PC-3 (cell line): ENCODE measurements at regions of chr10 and their contacts with region 1.

Region 1: DNA sequence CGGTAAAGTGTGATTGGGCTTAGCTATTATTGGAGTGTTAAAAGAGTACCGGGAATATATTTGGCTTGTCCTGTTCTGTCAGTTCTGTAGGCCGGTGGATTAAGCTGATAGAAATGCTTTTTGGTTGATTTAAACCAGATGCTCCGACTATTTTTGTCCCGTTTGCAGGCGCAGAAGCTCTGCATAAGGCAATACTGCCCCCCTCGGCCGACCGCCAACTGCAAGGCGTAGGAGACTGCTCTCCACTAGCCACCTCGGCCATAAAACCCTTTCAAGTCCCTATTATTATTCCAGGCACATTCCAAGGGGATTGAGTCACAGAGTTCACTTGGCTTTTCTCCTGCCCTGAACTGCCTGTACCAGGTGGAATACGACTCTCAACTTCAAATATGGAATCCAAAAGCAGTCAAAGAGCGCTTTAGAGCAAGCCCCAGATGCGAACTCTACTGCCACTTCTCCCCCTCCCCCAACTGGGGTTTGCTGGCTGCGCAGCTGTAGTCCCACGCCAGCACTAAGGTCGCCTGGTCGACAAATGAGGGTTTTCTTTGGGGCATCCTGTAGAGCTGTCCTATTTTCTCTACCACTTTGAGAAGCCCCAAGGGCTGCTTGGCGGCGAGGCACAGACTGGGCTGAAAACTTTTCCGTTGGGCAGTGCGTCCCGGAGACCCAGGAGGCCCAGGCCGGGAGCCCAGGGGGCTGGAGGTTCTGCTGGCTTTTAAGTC is 108.3 kb downstream of the REEP3 start:
- DNase-seq: peak; percentile 100
- ATAC-seq: peak; percentile 55
- H3K4me3 ChIP-seq: peak overlapping the region; percentile 73
- H3K27ac ChIP-seq: peak overlapping the region; percentile 95
- H3K4me1 ChIP-seq: peaks cover 52% of the 10 kb centered on the region
- H3K27me3 ChIP-seq: no peaks in the 10 kb centered on the region
- CTCF ChIP-seq: peak; percentile 98

Region 2: DNA sequence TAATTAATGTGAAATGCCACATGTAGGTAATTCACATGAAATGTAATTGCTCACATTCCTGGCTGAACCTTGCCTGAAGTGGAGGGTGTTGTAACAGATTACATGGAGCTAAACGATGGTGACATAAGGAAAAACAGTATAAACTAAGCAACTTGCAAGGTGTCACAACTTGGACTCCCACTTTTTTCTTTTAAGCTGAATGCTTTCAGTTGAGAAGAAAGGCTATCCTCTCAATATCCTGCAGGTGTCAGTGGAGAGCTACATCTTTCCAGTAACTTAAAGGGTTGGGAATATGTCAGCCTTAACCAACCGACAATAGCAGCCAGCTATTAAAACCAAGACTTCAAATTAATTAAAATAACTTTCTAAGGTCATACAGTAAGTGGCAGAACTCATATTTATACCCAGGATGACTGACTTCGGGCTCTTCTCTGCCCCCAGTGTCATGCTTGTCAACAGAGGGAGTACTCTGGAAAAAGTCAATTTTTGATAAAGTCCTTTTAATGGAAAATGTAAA is 462.7 kb before region 1 on chr10:
- CTCF ChIA-PET with region 1: interaction called, 17 read pairs
- POLR2A ChIA-PET with region 1: interaction called, 4 read pairs
- intact Hi-C with region 1: loop called (anchors 1 kb)
- DNase-seq: peak; percentile 99
- ATAC-seq: peak; percentile 70
- H3K4me3 ChIP-seq: no peak overlapping the region
- H3K27ac ChIP-seq: no peak overlapping the region
- H3K4me1 ChIP-seq: no peaks in the 10 kb centered on the region
- H3K27me3 ChIP-seq: no peaks in the 10 kb centered on the region
- CTCF ChIP-seq: peak; percentile 100

Region 3: GRCh38 chr10:63268798-63269503 is 360.6 kb before region 1 on chr10:
- CTCF ChIA-PET with region 1: interaction called, 14 read pairs
- POLR2A ChIA-PET with region 1: interaction called, 19 read pairs
- intact Hi-C with region 1: loop called (anchors 1 kb)
- DNase-seq: peak; percentile 100
- ATAC-seq: peak; percentile 90
- H3K4me3 ChIP-seq: peak overlapping the region; percentile 69
- H3K27ac ChIP-seq: peak overlapping the region; percentile 76
- H3K4me1 ChIP-seq: peaks cover 38% of the 10 kb centered on the region
- H3K27me3 ChIP-seq: no peaks in the 10 kb centered on the region
- CTCF ChIP-seq: peak; percentile 63

Region 4: DNA sequence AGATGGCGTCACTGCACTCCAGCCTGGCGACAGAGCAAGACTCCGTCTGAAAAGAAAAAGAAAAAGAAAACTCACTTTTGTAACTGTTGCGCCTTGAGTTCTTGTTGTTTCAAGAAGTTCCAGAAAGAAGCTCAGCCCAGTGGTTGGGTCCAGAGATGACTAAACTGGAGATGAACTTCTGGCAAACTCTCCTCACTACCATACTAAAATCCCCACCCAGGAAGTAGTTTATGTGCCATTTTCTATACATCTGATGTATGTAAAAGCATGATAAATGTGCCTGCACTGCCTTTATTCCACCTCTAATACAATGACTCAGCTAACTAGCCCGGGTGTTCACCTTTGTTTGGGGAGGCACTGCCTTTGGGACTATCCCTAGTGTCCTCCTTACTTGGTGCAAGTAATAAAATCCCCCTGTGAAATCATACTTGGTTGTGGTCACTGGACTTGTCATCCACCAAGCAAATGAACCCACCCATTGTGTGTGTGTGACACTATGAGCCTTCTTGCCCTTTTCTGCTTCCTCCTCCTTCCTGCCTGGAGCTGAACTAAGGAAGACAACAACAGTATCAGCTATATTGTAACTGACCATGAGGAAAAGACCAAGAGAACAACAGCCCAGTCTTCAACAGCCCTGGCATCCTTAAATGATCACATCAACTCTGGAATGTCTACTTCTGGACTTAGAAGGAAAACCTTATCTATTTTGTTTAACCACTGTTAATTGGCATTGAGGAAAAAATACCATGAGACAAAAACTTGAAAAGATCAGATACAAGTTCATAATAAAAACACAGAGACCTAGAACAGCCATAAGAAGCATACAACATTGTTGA is 197.3 kb before region 1 on chr10:
- CTCF ChIA-PET with region 1: no interaction called
- POLR2A ChIA-PET with region 1: no interaction called
- intact Hi-C with region 1: loop called (anchors 1 kb)
- DNase-seq: peak; percentile 98
- ATAC-seq: peak; percentile 55
- H3K4me3 ChIP-seq: no peak overlapping the region
- H3K27ac ChIP-seq: peak overlapping the region; percentile 71
- H3K4me1 ChIP-seq: peaks cover 65% of the 10 kb centered on the region
- H3K27me3 ChIP-seq: no peaks in the 10 kb centered on the region
- CTCF ChIP-seq: no peak

Region 5: DNA sequence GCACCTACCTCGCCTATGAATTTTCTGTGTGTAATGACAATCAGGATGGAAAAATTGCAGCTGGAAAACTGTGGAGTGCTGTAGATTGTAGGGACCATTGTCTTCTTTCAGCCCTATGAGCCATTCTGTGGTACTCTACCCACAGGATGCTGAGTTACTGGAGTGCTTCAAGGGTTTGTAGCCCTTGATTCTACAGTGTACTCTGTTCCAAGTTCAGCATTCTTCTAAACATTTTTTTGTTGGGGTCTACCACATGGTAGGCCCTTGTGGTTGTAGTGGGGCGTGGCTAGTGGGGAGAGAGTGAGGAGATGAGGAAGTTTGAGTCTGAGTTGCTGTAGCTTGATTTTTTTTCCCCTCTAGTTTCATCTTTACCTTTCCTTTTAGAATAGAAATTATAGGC is 74.9 kb before region 1 on chr10:
- CTCF ChIA-PET with region 1: interaction called, 4 read pairs
- POLR2A ChIA-PET with region 1: interaction called, 8 read pairs
- intact Hi-C with region 1: loop called (anchors 1 kb)
- DNase-seq: peak; percentile 89
- ATAC-seq: peak; percentile 45
- H3K4me3 ChIP-seq: peak overlapping the region; percentile 53
- H3K27ac ChIP-seq: peak overlapping the region; percentile 92
- H3K4me1 ChIP-seq: peaks cover 48% of the 10 kb centered on the region
- H3K27me3 ChIP-seq: no peaks in the 10 kb centered on the region
- CTCF ChIP-seq: no peak

Region 6: GRCh38 chr10:63666836-63667383 is 37.4 kb after region 1 on chr10:
- CTCF ChIA-PET with region 1: interaction called, 5 read pairs
- POLR2A ChIA-PET with region 1: interaction called, 4 read pairs
- intact Hi-C with region 1: loop called (anchors 2 kb)
- DNase-seq: peak; percentile 96
- ATAC-seq: peak; percentile 58
- H3K4me3 ChIP-seq: no peak overlapping the region; the same call in 1 of the 2 replicates
- H3K27ac ChIP-seq: peak overlapping the region; percentile 51
- H3K4me1 ChIP-seq: peaks cover 39% of the 10 kb centered on the region
- H3K27me3 ChIP-seq: no peaks in the 10 kb centered on the region
- CTCF ChIP-seq: no peak

Region 7: GRCh38 chr10:63767138-63767801 is 137.7 kb after region 1 on chr10:
- CTCF ChIA-PET with region 1: no interaction called
- POLR2A ChIA-PET with region 1: no interaction called
- intact Hi-C with region 1: loop called (anchors 2 kb)
- DNase-seq: peak; percentile 71
- ATAC-seq: peak; percentile 44
- H3K4me3 ChIP-seq: no peak overlapping the region
- H3K27ac ChIP-seq: no peak overlapping the region
- H3K4me1 ChIP-seq: no peaks in the 10 kb centered on the region
- H3K27me3 ChIP-seq: no peaks in the 10 kb centered on the region
- CTCF ChIP-seq: peak; percentile 83